H1 (cell line): ENCODE measurements at regions of chr11 and their contacts with region 1.

Region 1: GRCh38 chr11:19328586-19329311 is 88.0 kb upstream of the E2F8 start:
- DNase-seq: no peak
- H3K4me3 ChIP-seq: no peak overlapping the region
- H3K27ac ChIP-seq: no peak overlapping the region
- H3K4me1 ChIP-seq: no peaks in the 10 kb centered on the region
- H3K27me3 ChIP-seq: no peaks in the 10 kb centered on the region
- CTCF ChIP-seq: no peak
- EP300 ChIP-seq: no peak
- POLR2A ChIP-seq: no peak
- RAD21 ChIP-seq: no peak

Region 2: GRCh38 chr11:19187114-19187832 is 141.5 kb before region 1 on chr11:
- CTCF ChIA-PET with region 1: no interaction called
- POLR2A ChIA-PET with region 1: no interaction called
- DNase-seq: no peak
- H3K4me3 ChIP-seq: no peak overlapping the region
- H3K27ac ChIP-seq: no peak overlapping the region
- H3K4me1 ChIP-seq: peaks cover 0 to 1% (median 0%) of the 10 kb centered on the region in 4 experiments; a peak in 2 of 7 replicates
- H3K27me3 ChIP-seq: no peaks in the 10 kb centered on the region; a peak in 1 of 7 replicates
- CTCF ChIP-seq: no peak
- EP300 ChIP-seq: no peak
- POLR2A ChIP-seq: no peak
- RAD21 ChIP-seq: no peak

Region 3: DNA sequence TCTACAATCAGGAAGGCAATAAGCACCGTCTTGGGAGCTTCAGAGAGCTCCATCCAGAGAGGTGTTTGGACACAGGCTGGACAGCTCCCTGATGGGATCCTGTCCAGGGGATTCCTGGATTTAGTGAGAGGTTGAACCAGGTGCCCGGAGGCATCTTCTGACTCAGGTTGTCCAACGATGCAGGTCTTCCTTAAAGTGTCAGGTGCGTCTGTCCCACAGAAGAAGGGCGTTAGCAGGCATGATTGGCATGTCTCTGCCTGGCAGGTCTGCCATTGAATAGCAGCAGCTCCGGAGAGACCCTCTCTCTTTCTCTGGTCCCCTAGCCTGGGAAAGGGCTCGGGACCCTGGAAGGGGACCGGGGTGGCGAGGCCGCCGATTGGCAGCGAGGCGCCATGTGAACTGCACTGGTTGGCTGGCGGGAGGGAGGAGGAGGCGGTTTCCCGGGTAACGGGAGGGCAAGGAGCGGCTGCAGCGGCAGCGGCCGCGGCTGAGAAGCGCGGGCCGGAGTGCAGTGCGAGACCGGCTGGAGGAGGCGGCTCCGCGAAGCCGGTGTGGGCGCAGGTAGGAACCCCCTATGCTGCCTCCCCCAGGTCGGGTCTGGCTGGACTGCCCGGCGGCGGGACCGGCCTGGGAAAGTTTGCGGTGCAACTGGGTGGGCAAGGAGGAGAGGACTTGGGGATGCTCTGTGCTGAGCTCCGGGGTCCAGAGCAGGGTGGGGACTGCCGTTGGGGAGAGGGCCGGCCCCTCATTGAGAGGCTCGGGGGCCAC is 16.2 kb after region 1 on chr11:
- CTCF ChIA-PET with region 1: interaction called, 11 read pairs
- POLR2A ChIA-PET with region 1: no interaction called
- DNase-seq: peak in 1 of 2 experiments; percentile 84
- H3K4me3 ChIP-seq: peak overlapping the region in 3 of 4 experiments; percentile 39 to 60 (median 40); a peak in 5 of 8 replicates
- H3K27ac ChIP-seq: no peak overlapping the region
- H3K4me1 ChIP-seq: peaks cover 0 to 7% (median 5%) of the 10 kb centered on the region in 4 experiments; a peak in 5 of 7 replicates
- H3K27me3 ChIP-seq: peaks cover 26 to 53% (median 46%) of the 10 kb centered on the region in 4 experiments
- CTCF ChIP-seq: no peak
- EP300 ChIP-seq: no peak
- POLR2A ChIP-seq: no peak
- RAD21 ChIP-seq: no peak